Mammary epithelial cell (primary cell): ENCODE measurements at regions of chr17 and their contacts with region 1.

Region 1: GRCh38 chr17:18117982-18118975 is 9.7 kb downstream of the MYO15A start:
- DNase-seq: no peak
- H3K4me3 ChIP-seq: no peak overlapping the region
- H3K27ac ChIP-seq: no peak overlapping the region
- H3K4me1 ChIP-seq: no peaks in the 10 kb centered on the region
- H3K27me3 ChIP-seq: peaks cover 2% of the 10 kb centered on the region
- CTCF ChIP-seq: no peak

Region 2: DNA sequence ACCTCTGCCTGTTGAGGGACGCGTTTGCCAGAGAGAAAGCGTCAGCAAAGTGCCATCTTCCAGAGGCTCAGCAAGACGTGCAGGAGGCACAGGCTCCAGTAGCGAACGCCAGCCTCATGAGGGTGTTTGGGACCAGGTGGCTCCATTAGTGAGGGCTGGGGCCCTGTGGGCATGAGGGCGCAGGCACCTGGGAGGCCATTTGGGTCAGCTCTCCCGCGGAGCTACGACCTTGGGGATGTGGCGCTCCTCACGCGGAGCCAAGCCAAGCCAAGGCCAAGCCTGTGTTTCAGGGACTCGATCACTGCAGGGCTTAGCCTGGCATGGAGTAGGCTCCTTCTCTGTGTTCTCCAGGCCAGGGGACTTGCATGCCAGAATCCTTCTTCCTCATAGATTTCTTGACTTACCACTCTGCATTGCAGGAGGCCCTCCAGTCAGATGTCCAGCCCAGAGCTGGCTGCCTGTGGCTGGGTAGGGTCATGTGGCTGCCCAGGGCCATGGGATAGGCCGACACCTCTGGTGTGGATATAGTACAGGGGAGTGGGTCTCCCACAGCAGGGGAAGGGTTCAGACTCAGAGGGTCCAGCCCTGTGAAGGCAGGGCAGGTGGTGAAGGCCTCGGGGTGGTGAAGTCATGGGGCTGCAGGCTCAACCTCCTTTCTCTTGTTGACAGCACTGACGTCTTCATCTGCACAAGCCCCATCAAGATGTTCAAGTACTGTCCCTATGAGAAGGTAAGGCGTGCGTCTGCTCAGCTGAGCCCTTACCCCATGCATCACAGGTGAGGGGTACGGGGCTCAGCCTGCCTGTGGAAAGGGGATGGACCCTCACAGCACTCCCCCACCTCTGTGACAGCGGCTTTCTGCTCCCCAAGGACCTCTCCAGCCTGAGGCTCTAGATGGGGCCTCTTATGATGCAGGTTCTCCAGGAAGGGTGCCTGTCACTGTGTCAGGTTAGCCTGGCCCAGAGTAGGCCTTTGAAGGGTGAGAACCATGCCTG is 795.5 kb before region 1 on chr17:
- CTCF ChIA-PET with region 1: no interaction called
- dilution Hi-C with region 1: no loop called
- in situ Hi-C with region 1: no loop called
- intact Hi-C with region 1: no loop called
- DNase-seq: no peak
- H3K4me3 ChIP-seq: no peak overlapping the region
- H3K27ac ChIP-seq: no peak overlapping the region
- H3K4me1 ChIP-seq: no peaks in the 10 kb centered on the region
- H3K27me3 ChIP-seq: no peaks in the 10 kb centered on the region
- CTCF ChIP-seq: no peak

Region 3: DNA sequence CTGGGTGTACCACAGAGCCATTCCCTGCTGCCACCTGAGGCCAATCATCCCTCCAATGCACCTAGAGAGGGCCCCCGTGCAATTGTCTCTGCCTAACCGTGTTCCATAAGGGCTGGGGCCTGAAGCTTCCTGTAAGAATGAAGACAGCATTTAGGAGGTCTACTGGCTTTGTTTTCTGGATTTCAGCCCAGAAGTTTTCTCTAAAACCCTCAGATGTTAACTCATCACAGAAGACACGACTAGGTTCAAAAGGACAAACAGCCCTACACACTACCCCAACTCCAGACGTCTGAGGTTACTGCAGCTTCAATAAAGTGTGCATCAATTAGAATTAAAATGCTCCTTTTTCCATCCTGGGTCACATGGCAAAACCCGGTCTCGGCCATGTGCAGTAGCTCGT is 41.3 kb before region 1 on chr17:
- CTCF ChIA-PET with region 1: no interaction called
- dilution Hi-C with region 1: loop called (anchors 5 kb)
- in situ Hi-C with region 1: no loop called
- intact Hi-C with region 1: no loop called
- DNase-seq: no peak
- H3K4me3 ChIP-seq: no peak overlapping the region
- H3K27ac ChIP-seq: no peak overlapping the region
- H3K4me1 ChIP-seq: no peaks in the 10 kb centered on the region
- H3K27me3 ChIP-seq: no peaks in the 10 kb centered on the region
- CTCF ChIP-seq: no peak